Naive thymus-derived CD4-positive, alpha-beta T cell (primary cell): ENCODE measurements at regions of chr20 and their contacts with region 1.

Region 1: GRCh38 chr20:63955827-63956663 is at the start of gene UCKL1:
- DNase-seq: peak; percentile 82 to 95 (median 93)
- ATAC-seq: peak; percentile 91
- H3K4me3 ChIP-seq: peak within 1 kb of the TSS; percentile 87
- H3K4me3 Mint-ChIP-seq: peak within 1 kb of the TSS; percentile 79 to 87 (median 86)
- H3K27ac ChIP-seq: peak within 1 kb of the TSS; percentile 93
- H3K27ac Mint-ChIP-seq: peak within 1 kb of the TSS; percentile 32 to 89 (median 80)
- H3K4me1 ChIP-seq: peaks cover 18 to 26% of the 10 kb centered on the region in 2 donors
- H3K4me1 Mint-ChIP-seq: peaks cover 19 to 37% (median 27%) of the 10 kb centered on the region in 7 donors
- H3K27me3 ChIP-seq: no peaks in the 10 kb centered on the region
- H3K27me3 Mint-ChIP-seq: no peaks in the 10 kb centered on the region
- total RNA-seq, gene UCKL1: 42.0 to 49.0 (median 46.6) TPM

Region 2: DNA sequence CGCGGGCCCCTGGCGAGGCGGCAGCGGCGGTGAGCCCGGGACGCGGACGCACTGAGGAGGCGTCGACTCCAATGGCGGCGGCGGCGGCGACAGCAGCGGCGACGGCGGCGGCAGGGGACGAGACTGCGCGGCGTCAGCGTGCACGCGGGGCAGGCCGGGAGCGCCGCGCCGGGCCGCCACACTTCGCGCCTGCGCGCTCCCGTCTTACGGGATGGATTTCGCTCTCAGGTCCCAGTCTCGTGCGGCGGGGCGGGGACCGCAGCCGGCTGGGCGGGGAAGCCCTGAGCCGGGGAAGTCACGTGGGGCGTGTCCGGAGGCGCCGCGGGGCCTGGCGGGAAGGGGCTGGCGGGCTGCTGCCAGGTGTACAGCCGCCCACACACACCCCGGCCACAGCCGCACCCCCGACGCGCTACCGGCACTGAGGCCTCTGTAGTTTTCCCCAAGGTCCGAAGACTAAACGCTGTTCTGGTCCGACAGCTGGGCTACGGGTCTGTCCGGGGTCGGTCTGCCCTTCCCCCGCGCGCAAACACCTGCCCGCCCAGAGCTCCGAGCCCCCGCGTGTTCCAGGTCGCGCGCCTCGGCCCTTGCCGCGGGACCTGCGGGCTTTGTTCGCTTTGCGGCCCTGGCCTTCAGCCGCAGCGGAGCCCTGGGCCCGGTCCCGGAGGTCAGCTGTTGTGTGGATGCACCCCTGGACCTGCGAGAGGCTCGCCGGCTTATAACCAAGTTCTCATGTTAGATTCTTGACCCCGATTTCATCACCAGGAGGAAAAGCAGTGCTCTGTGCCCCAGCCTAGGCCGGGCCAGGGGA is 739.8 kb before region 1 on chr20 and contains the start of gene YTHDF1:
- CTCF ChIA-PET with region 1: no interaction called
- POLR2A ChIA-PET with region 1: no interaction called
- intact Hi-C with region 1: loop called (anchors 2 to 5 kb)
- DNase-seq: peak; percentile 93 to 98 (median 96)
- ATAC-seq: peak; percentile 97
- H3K4me3 ChIP-seq: peak within 1 kb of the TSS; percentile 78
- H3K4me3 Mint-ChIP-seq: peak within 1 kb of the TSS; percentile 88 to 97 (median 92)
- H3K27ac ChIP-seq: peak within 1 kb of the TSS; percentile 95
- H3K27ac Mint-ChIP-seq: peak within 1 kb of the TSS; percentile 86 to 96 (median 91)
- H3K4me1 ChIP-seq: peaks cover 10 to 39% of the 10 kb centered on the region in 2 donors
- H3K4me1 Mint-ChIP-seq: peaks cover 34 to 49% (median 46%) of the 10 kb centered on the region in 7 donors
- H3K27me3 ChIP-seq: no peaks in the 10 kb centered on the region
- H3K27me3 Mint-ChIP-seq: peaks cover 0 to 6% (median 0%) of the 10 kb centered on the region in 5 donors
- total RNA-seq, gene YTHDF1: 35.9 to 52.1 (median 42.0) TPM

Region 3: DNA sequence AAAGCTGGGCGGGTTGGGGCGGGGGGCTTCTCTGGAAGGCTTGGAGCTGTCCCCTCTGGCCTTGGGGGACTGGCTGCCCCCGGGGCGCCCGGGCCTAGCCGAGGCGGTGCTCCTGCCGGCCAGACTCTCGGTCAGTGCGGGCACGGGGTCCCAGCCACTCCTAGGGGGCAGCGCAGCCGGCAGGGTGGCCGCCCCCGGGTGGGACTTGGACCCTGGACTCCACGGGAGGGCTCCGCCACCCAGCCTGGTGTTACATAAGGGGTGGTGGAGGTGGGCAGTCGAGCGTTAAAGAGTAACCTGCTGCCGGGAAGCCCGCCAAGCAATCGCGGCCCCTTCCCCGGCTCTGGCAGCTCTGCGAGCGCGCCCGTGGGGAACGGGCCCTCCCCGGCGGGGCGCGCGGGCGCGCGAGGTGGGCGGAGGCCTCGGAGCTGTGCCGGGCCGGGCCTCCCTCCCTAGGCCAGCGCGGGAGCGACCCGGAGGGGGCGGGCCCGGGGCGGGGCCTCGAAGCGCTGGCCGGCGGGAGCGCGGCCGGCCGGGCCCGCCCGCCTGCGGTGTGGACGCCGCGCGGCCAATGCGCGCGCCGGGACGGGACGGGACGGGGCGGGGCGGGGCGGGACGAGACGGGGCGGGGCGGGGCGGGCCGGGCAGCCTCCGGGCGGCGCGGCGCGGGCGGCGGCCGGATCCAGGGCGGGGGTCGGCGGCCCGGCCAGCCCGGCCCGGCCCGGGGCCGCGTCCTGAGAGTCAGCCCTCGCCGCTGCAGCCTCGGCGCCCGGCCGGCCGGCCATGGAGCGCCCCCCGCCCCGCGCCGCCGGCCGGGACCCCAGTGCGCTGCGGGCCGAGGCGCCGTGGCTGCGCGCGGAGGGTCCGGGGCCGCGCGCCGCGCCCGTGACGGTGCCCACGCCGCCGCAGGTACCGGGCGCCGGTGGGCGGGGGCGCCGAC is 216.6 kb before region 1 on chr20 and contains the start of gene SLC2A4RG:
- CTCF ChIA-PET with region 1: no interaction called
- POLR2A ChIA-PET with region 1: interaction called, 4 read pairs
- intact Hi-C with region 1: loop called in 1 of 2 experiments (anchors 2 kb)
- DNase-seq: peak; percentile 49 to 86 (median 69)
- ATAC-seq: peak; percentile 62
- H3K4me3 ChIP-seq: peak within 1 kb of the TSS; percentile 99
- H3K4me3 Mint-ChIP-seq: peak within 1 kb of the TSS; percentile 33 to 92 (median 80)
- H3K27ac ChIP-seq: peak within 1 kb of the TSS; percentile 71
- H3K27ac Mint-ChIP-seq: peak within 1 kb of the TSS in 1 of 9 donors; percentile 38
- H3K4me1 ChIP-seq: peaks cover 21 to 29% of the 10 kb centered on the region in 2 donors
- H3K4me1 Mint-ChIP-seq: peaks cover 7 to 20% (median 16%) of the 10 kb centered on the region in 7 donors
- H3K27me3 ChIP-seq: no peaks in the 10 kb centered on the region
- H3K27me3 Mint-ChIP-seq: no peaks in the 10 kb centered on the region
- total RNA-seq, gene SLC2A4RG: 88.7 to 136 (median 111) TPM

Region 4: DNA sequence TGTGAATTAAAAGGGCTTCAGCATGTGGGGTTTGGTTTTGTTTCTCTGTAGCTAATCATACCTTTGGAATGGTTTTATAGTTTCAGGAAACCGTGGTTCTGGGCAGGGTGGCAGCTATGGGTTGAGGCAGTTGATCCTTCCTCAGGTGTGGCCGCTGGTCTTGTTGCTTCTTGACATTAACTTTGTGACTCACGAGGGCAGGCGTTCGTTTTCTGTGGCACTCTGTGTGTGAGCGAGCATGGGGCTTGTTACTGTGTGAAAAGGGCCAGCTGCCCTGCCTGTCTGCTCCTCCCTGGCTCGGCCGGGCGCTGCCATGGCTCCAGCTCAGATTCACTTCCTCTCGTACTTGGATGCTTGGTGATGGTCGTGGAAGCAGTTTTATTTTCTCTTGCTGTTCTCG is 44.9 kb before region 1 on chr20:
- CTCF ChIA-PET with region 1: no interaction called
- POLR2A ChIA-PET with region 1: no interaction called
- intact Hi-C with region 1: loop called in 1 of 2 experiments (anchors 1 kb)
- DNase-seq: no peak
- ATAC-seq: peak; percentile 53
- H3K4me3 ChIP-seq: no peak overlapping the region
- H3K4me3 Mint-ChIP-seq: peak overlapping the region in 4 of 10 donors; percentile 3 to 59 (median 30)
- H3K27ac ChIP-seq: no peak overlapping the region
- H3K27ac Mint-ChIP-seq: peak overlapping the region in 6 of 9 donors; percentile 3 to 78 (median 44)
- H3K4me1 ChIP-seq: peaks cover 7 to 17% of the 10 kb centered on the region in 2 donors
- H3K4me1 Mint-ChIP-seq: peaks cover 28 to 63% (median 41%) of the 10 kb centered on the region in 7 donors
- H3K27me3 ChIP-seq: no peaks in the 10 kb centered on the region
- H3K27me3 Mint-ChIP-seq: no peaks in the 10 kb centered on the region

Region 5: GRCh38 chr20:64038565-64039292 is 82.7 kb after region 1 on chr20:
- CTCF ChIA-PET with region 1: interaction called, 4 read pairs
- POLR2A ChIA-PET with region 1: interaction called, 3 read pairs
- intact Hi-C with region 1: loop called in 1 of 2 experiments (anchors 5 kb)
- DNase-seq: peak; percentile 55 to 86 (median 76)
- ATAC-seq: peak; percentile 80
- H3K4me3 ChIP-seq: peak overlapping the region; percentile 62
- H3K4me3 Mint-ChIP-seq: peak overlapping the region; percentile 18 to 89 (median 71)
- H3K27ac ChIP-seq: peak overlapping the region; percentile 57
- H3K27ac Mint-ChIP-seq: peak overlapping the region in 4 of 9 donors; percentile 28 to 92 (median 64)
- H3K4me1 ChIP-seq: peaks cover 40 to 49% of the 10 kb centered on the region in 2 donors
- H3K4me1 Mint-ChIP-seq: peaks cover 26 to 49% (median 33%) of the 10 kb centered on the region in 7 donors
- H3K27me3 ChIP-seq: no peaks in the 10 kb centered on the region
- H3K27me3 Mint-ChIP-seq: no peaks in the 10 kb centered on the region

Region 6: GRCh38 chr20:64119681-64120341 is 163.8 kb after region 1 on chr20:
- CTCF ChIA-PET with region 1: no interaction called
- POLR2A ChIA-PET with region 1: no interaction called
- intact Hi-C with region 1: loop called in 1 of 2 experiments (anchors 1 kb)
- DNase-seq: peak in 3 of 9 donors; percentile 2 to 24 (median 14)
- ATAC-seq: peak; percentile 18
- H3K4me3 ChIP-seq: peak overlapping the region; percentile 36
- H3K4me3 Mint-ChIP-seq: peak overlapping the region; percentile 39 to 80 (median 73)
- H3K27ac ChIP-seq: peak overlapping the region; percentile 22
- H3K27ac Mint-ChIP-seq: peak overlapping the region; percentile 69 to 85 (median 78)
- H3K4me1 ChIP-seq: peaks cover 5 to 9% of the 10 kb centered on the region in 2 donors
- H3K4me1 Mint-ChIP-seq: peaks cover 0 to 10% (median 8%) of the 10 kb centered on the region in 7 donors
- H3K27me3 ChIP-seq: no peaks in the 10 kb centered on the region
- H3K27me3 Mint-ChIP-seq: peaks cover 0 to 28% (median 0%) of the 10 kb centered on the region in 5 donors